Activated T-helper 1 cell treated with anti-CD3 and anti-CD28 coated beads, Interleukin-12 subunit alpha, Interleukin-12 subunit beta, Interleukin-2, Interleukin-4 antibody, amounts not matched to agents 30 ng/mL and 10 ng/mL and 1 ng/mL, durations not matched to agents 14 hours and 24 hours and 36 hours (primary cell): ENCODE measurements at regions of chr14 and their contacts with region 1.

Region 1: GRCh38 chr14:24442273-24443052 is at the start of gene SDR39U1:
- DNase-seq: peak; percentile 97
- H3K4me3 Mint-ChIP-seq: peak within 1 kb of the TSS; percentile 92
- H3K27ac Mint-ChIP-seq: peak within 1 kb of the TSS; percentile 91
- H3K4me1 Mint-ChIP-seq: peaks cover 45% of the 10 kb centered on the region
- H3K27me3 Mint-ChIP-seq: no peaks in the 10 kb centered on the region
- total RNA-seq, gene SDR39U1: 41.5 and 48.0 TPM in 2 replicates

Region 2: DNA sequence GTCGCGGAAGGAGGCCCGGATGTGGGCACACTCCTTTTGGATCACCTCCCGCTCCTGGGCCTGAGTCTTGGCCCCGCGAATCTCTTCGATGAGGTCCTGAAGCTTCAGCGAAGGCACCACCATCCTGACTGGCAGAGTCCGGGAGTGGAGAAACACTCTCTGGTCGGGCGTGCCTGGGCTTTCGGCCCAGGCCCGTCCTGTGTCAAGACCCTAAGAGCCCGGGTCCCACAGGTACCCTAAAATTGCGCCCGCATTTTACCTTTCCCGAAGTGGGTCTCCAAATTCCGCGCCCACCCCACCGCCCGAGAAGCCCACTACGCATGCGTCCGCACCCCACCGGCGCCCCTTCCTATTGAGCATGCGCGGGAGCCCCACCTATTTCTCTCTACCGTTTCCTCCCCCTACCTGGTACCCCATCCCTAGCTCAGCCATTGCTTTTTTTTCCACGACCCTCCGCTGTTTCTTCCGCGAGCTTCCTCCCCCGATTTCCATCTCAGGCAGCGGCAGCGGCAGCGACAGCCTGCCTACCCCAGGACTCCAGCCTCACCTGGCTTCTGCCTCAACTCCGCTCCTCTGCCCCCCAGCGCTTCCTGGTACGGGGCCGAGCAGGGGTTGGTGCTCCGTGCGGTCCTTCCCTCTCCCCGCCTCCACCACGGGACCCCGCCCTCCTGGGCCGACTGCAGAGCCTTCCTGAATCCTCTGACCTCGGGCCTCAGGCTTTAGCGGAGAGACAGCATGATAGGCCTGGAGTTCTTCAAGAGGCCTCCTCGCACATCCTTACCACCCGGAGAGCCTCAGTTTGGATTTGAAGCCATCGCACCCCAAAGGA is 875.1 kb before region 1 on chr14 and contains the start of gene AP1G2:
- intact Hi-C with region 1: loop called (anchors 5 kb)
- DNase-seq: peak; percentile 87
- H3K4me3 Mint-ChIP-seq: peak within 1 kb of the TSS; percentile 100
- H3K27ac Mint-ChIP-seq: peak within 1 kb of the TSS; percentile 97
- H3K4me1 Mint-ChIP-seq: peaks cover 43% of the 10 kb centered on the region
- H3K27me3 Mint-ChIP-seq: peaks cover 4% of the 10 kb centered on the region
- total RNA-seq, gene AP1G2: 137 and 145 TPM in 2 replicates

Region 3: GRCh38 chr14:24188251-24189058 is 254.0 kb before region 1 on chr14 and contains the start of gene IPO4:
- intact Hi-C with region 1: loop called (anchors 2 kb)
- DNase-seq: peak; percentile 93
- H3K4me3 Mint-ChIP-seq: peak within 1 kb of the TSS; percentile 91
- H3K27ac Mint-ChIP-seq: peak within 1 kb of the TSS; percentile 86
- H3K4me1 Mint-ChIP-seq: peaks cover 42% of the 10 kb centered on the region
- H3K27me3 Mint-ChIP-seq: no peaks in the 10 kb centered on the region
- total RNA-seq, gene IPO4: 106 and 107 TPM in 2 replicates

Region 4: DNA sequence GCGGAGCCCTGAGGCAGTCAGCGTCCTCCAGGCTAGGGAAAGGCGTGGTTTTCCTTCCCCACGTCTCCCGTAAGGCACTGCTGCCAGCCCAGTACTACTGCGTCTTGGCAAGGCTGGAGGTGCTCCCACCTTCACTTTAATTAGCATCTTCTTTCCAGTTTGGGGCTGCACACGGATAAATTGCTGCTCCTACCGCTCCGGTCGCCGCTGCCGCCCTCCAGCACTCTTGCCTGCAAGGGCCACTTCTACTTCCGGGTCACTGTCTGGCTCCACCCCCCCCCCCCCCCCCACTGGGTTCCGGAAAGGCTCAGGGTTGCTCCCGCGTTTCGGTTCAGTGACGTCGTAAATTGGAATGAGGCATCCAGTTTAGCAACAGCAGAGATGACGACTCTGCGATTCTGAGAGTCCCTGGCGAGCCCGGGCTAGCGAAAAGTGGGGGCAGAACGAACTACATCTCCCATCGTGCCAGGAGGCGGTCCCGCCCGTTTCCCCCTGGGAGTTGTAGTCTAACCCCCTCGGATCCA is 210.3 kb before region 1 on chr14 and contains the start of gene NEDD8:
- intact Hi-C with region 1: loop called (anchors 1 kb)
- DNase-seq: peak; percentile 84
- H3K4me3 Mint-ChIP-seq: peak within 1 kb of the TSS; percentile 93
- H3K27ac Mint-ChIP-seq: peak within 1 kb of the TSS; percentile 91
- H3K4me1 Mint-ChIP-seq: peaks cover 50% of the 10 kb centered on the region
- H3K27me3 Mint-ChIP-seq: no peaks in the 10 kb centered on the region
- total RNA-seq, gene NEDD8: 177 and 185 TPM in 2 replicates

Region 5: GRCh38 chr14:24271134-24271833 is 171.2 kb before region 1 on chr14 and contains the start of gene RABGGTA:
- intact Hi-C with region 1: loop called (anchors 1 kb)
- DNase-seq: peak; percentile 87
- H3K4me3 Mint-ChIP-seq: peak within 1 kb of the TSS; percentile 93
- H3K27ac Mint-ChIP-seq: peak within 1 kb of the TSS; percentile 96
- H3K4me1 Mint-ChIP-seq: peaks cover 52% of the 10 kb centered on the region
- H3K27me3 Mint-ChIP-seq: no peaks in the 10 kb centered on the region
- total RNA-seq, gene RABGGTA: 52.2 and 54.4 TPM in 2 replicates

Region 6: DNA sequence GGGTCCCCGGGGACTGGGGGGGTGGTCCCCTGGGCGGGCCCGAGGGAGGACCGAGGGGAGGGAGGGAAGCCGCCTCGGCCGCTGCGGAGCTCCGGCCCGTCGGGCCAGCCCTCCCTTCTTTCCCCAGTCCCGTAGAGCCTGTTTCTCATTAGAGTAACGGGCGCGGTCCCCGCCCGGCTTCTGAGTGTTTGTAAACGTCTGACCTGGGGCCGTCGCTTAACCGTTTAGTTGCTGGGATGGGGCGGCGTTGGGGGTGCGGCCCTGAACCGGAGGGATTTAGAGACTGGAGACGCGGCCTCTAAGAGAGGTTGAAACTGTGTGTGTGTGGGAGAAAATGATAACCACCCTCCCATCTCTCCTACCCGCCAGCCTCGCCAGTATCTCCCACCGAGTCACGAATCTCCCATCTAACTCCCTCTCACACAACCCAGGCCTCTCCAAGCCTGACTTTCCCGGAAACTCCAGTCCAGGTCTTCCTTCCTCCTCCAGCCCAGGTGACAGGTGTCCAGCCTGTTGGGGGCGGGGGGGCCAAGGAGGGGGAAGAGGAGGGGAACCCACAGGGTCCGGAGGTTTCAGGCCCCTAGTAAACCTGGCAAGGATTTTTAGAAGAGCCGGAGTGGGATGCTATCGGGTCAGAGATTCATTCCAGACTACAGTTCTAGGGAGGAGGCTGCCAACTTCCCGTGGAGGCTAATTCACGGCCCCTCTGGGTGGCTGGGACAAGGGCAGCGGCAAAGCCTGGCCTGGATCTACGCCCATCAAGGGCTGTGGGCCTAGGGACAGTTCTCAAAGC is 75.5 kb before region 1 on chr14:
- intact Hi-C with region 1: no loop called
- DNase-seq: no peak
- H3K4me3 Mint-ChIP-seq: peak overlapping the region; percentile 37
- H3K27ac Mint-ChIP-seq: no peak overlapping the region
- H3K4me1 Mint-ChIP-seq: peaks cover 23% of the 10 kb centered on the region
- H3K27me3 Mint-ChIP-seq: peaks cover 55% of the 10 kb centered on the region

Region 7: DNA sequence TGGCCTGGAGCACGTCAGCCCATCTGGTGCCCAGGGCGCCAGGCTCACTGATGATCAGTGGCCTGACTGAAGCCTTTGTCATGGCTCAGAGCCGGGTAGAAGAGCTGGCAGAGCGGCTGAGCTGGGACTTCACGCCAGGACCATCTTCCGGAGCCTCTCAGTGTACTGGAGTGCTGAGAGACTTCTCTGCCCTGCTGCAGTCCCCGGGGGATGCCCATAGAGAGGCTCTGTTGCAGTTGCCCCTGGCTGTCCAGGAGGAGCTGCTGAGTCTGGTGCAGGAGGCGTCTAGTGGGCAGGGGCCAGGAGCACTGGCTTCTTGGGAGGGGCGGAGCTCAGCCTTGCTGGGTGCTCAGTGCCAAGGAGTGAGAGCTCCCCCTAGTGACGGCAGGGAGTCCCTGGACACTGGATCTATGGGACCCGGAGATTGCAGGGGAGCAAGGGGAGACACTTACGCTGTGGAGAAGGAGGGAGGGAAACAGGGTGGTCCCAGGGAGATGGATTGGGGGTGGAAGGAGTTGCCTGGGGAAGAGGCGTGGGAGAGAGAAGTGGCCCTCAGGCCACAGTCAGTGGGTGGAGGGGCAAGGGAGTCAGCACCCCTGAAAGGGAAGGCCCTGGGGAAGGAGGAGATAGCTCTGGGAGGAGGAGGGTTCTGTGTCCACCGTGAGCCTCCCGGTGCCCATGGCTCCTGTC is 10.7 kb before region 1 on chr14:
- intact Hi-C with region 1: loop called (anchors 1 kb)
- DNase-seq: peak; percentile 85
- H3K4me3 Mint-ChIP-seq: peak overlapping the region; percentile 90
- H3K27ac Mint-ChIP-seq: peak overlapping the region; percentile 95
- H3K4me1 Mint-ChIP-seq: peaks cover 51% of the 10 kb centered on the region
- H3K27me3 Mint-ChIP-seq: no peaks in the 10 kb centered on the region

Region 8: DNA sequence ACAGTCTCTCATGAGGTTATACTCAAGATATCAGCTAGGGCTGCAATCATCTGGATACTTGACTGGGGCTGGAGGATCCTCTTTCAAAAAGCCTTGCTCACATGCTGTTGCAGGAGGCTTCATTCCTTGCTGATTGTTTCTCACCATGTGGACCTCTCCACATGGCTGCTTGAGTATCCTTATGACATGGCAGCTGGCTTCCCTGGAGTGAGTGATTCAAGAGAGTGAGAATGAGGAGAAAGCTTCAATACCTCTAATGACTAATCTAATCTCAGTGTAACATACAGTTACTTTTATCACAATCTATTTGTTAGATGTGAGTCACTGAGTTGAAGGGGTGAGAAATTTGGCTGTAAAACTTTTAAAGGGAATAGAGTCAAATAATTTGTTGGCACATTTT is 14.5 kb after region 1 on chr14:
- intact Hi-C with region 1: no loop called
- DNase-seq: no peak
- H3K4me3 Mint-ChIP-seq: no peak overlapping the region
- H3K27ac Mint-ChIP-seq: no peak overlapping the region
- H3K4me1 Mint-ChIP-seq: no peaks in the 10 kb centered on the region
- H3K27me3 Mint-ChIP-seq: no peaks in the 10 kb centered on the region